ENCODE measurements at regions of chr16 and their contacts with region 1.

Region 1: DNA sequence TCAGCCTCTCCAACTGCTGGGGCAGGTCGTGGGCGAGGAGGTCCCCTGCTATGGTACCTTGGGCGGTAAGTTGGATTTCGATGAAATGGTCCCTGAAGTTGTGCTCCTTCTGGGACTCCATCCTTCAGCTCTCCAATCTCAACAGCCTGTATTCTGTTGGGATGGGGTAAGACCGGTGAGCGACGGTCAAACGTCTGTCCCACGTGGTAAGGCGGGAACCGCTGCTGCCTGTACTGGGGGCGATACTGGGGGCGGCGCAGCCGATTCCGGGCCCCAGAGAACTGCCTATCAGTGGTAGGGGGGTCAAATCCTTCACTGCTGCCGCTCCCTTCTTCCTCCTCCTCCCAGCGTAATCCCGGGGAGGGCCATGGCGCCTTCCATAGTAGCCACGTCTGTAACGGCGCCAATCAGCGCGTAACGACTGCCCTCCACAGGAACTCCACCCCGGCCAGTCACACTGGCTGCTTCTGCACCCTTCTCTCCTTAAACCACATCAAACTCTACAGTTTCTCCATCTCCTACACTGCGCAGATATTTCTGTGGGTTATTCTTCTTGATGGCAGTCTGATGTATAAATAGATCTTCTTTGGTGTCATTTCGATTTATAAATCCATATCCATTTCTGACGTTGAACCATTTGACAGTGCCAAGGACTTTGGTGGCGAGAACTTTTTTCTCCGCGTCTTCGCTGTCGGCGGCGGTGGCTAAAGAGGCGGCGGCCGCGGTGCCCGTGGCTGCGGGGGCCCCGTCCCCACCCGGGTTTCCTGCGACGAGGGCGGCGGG is 41.1 kb downstream of the AHSP start:
- DNase-seq: no peak
- ATAC-seq: no peak
- H3K4me3 ChIP-seq: no peak overlapping the region
- H3K27ac ChIP-seq: no peak overlapping the region
- H3K4me1 ChIP-seq: no peaks in the 10 kb centered on the region
- H3K27me3 ChIP-seq: no peaks in the 10 kb centered on the region
- CTCF ChIP-seq: no peak
- EP300 ChIP-seq: no peak
- POLR2A ChIP-seq: no peak
- RAD21 ChIP-seq: no peak

Region 2: GRCh38 chr16:31519759-31520431 is 48.9 kb before region 1 on chr16:
- CTCF ChIA-PET with region 1: no interaction called
- POLR2A ChIA-PET with region 1: no interaction called
- RAD21 ChIA-PET with region 1: no interaction called
- SMC1A ChIA-PET with region 1: no interaction called
- in situ Hi-C with region 1: loop called (anchors 5 kb)
- intact Hi-C with region 1: no loop called
- DNase-seq: no peak
- ATAC-seq: no peak
- H3K4me3 ChIP-seq: no peak overlapping the region
- H3K27ac ChIP-seq: no peak overlapping the region
- H3K4me1 ChIP-seq: no peaks in the 10 kb centered on the region
- H3K27me3 ChIP-seq: no peaks in the 10 kb centered on the region
- CTCF ChIP-seq: no peak
- EP300 ChIP-seq: no peak
- POLR2A ChIP-seq: no peak
- RAD21 ChIP-seq: no peak

Region 3: GRCh38 chr16:31537362-31538242 is 31.2 kb before region 1 on chr16:
- CTCF ChIA-PET with region 1: no interaction called
- POLR2A ChIA-PET with region 1: no interaction called
- RAD21 ChIA-PET with region 1: no interaction called
- SMC1A ChIA-PET with region 1: no interaction called
- in situ Hi-C with region 1: no loop called
- intact Hi-C with region 1: no loop called
- DNase-seq: no peak
- ATAC-seq: no peak
- H3K4me3 ChIP-seq: no peak overlapping the region
- H3K27ac ChIP-seq: no peak overlapping the region
- H3K4me1 ChIP-seq: no peaks in the 10 kb centered on the region
- H3K27me3 ChIP-seq: no peaks in the 10 kb centered on the region
- CTCF ChIP-seq: no peak
- EP300 ChIP-seq: no peak
- POLR2A ChIP-seq: no peak
- RAD21 ChIP-seq: no peak

Region 4: DNA sequence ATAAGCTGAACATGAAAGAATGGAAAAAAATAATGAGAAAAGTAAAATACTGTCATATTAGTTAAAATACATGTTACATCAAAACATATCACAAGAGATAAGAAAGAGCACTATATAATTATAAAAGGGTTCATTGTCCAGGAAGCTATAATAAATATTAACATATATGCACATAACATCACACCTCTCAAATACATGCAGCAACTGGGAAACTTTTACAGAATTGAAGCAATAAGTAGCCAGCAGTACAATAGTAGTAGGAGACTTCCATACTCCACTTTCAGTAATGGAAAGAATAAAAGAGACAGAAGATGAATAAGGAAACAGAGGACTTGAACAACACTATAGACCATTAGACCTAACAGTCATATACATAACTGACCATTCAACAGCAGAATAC is 49.4 kb after region 1 on chr16:
- CTCF ChIA-PET with region 1: no interaction called
- POLR2A ChIA-PET with region 1: no interaction called
- RAD21 ChIA-PET with region 1: no interaction called
- SMC1A ChIA-PET with region 1: no interaction called
- in situ Hi-C with region 1: no loop called
- intact Hi-C with region 1: no loop called
- DNase-seq: no peak
- ATAC-seq: no peak
- H3K4me3 ChIP-seq: no peak overlapping the region
- H3K27ac ChIP-seq: no peak overlapping the region
- H3K4me1 ChIP-seq: no peaks in the 10 kb centered on the region
- H3K27me3 ChIP-seq: no peaks in the 10 kb centered on the region
- CTCF ChIP-seq: no peak
- EP300 ChIP-seq: no peak
- POLR2A ChIP-seq: no peak
- RAD21 ChIP-seq: no peak